Activated T-helper 2 cell treated with anti-CD3 and anti-CD28 coated beads, Interferon-gamma antibody, Interleukin-2, Interleukin-4, amounts not matched to agents 10 μg/mL and 5 μg/mL and 100 μg/mL, durations not matched to agents 14 hours and 24 hours and 36 hours (primary cell): ENCODE measurements at regions of chr11 and their contacts with region 1.

Region 1: GRCh38 chr11:67468835-67469811 is at the start of gene TMEM134:
- DNase-seq: peak; percentile 86
- H3K4me3 Mint-ChIP-seq: peak within 1 kb of the TSS; percentile 92
- H3K27ac Mint-ChIP-seq: peak within 1 kb of the TSS; percentile 68
- H3K4me1 Mint-ChIP-seq: peaks cover 25% of the 10 kb centered on the region
- H3K27me3 Mint-ChIP-seq: no peaks in the 10 kb centered on the region
- total RNA-seq, gene TMEM134: 58.5 and 62.0 TPM in 2 replicates

Region 2: GRCh38 chr11:67428052-67428914 is 40.8 kb before region 1 on chr11 and contains the start of gene RPS6KB2:
- intact Hi-C with region 1: loop called (anchors 1 kb)
- DNase-seq: peak; percentile 98
- H3K4me3 Mint-ChIP-seq: peak within 1 kb of the TSS; percentile 98
- H3K27ac Mint-ChIP-seq: peak within 1 kb of the TSS; percentile 93
- H3K4me1 Mint-ChIP-seq: peaks cover 15% of the 10 kb centered on the region
- H3K27me3 Mint-ChIP-seq: no peaks in the 10 kb centered on the region
- total RNA-seq, gene RPS6KB2: 67.6 and 70.2 TPM in 2 replicates

Region 3: DNA sequence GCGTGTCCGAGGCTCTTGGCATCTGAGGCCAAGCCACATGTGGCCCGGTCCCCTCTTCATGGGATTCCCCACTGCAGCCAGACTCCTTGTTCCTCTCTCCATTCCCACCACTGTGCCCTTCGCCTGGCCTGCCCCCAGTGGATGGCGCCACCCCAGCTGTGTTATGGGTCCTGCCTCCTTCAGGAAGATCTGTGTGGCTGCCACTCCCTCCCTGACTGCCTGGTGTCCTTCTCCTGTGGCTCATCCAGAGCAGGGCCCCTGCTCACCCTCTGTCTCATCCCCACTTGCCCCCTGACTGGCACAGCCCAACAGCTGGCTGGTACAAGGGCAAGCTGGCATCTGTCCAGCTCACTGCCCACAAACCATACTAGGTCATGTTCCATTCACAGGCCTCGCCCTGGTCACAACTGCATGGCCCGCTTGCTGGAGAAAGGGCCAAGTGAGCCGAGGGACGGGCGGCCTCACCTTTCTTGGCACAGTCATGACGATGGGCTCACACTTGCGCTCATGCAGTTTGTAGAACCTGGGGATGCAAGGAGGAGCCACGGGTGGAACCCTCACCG is 29.7 kb before region 1 on chr11:
- intact Hi-C with region 1: loop called (anchors 2 kb)
- DNase-seq: no peak
- H3K4me3 Mint-ChIP-seq: peak overlapping the region; percentile 94
- H3K27ac Mint-ChIP-seq: peak overlapping the region; percentile 95
- H3K4me1 Mint-ChIP-seq: peaks cover 37% of the 10 kb centered on the region
- H3K27me3 Mint-ChIP-seq: no peaks in the 10 kb centered on the region

Region 4: GRCh38 chr11:68242616-68243015 is 773.5 kb after region 1 on chr11:
- intact Hi-C with region 1: no loop called
- DNase-seq: no peak
- H3K4me3 Mint-ChIP-seq: no peak overlapping the region
- H3K27ac Mint-ChIP-seq: no peak overlapping the region
- H3K4me1 Mint-ChIP-seq: no peaks in the 10 kb centered on the region
- H3K27me3 Mint-ChIP-seq: peaks cover 5% of the 10 kb centered on the region